HEK293 (cell line): ENCODE measurements at regions of chrX and their contacts with region 1.

Region 1: DNA sequence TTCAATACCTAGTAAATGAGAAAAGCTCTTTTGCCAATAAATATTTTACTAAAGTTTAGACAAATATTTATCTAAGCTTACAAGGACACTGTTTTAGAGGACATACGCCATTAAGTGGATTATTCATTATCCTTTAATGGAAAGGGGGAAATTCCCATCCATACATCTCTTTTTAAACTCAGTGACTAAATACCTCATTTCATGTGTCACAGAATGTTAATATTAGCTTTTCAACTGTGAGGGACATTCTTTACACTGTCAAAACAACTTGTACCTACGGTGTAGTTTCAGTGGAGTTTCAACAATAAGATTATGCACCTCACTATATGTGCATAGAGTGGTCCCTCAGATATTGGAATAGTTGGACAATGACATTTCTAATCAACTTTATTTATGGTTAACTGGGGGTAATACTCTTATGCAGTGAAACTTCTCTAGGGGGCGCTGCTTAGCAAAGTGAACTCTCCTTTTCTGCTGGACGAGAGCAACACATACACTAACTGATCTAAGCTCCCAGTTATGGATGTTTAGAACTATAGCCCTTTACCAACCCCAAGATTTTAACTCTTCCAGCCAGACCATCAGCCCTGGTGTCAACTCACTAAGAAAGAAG is 9.7 kb downstream of the HS6ST2 start:
- H3K4me3 ChIP-seq: no peak overlapping the region
- H3K27ac ChIP-seq: no peak overlapping the region
- H3K4me1 ChIP-seq: no peaks in the 10 kb centered on the region
- CTCF ChIP-seq: no peak

Region 2: DNA sequence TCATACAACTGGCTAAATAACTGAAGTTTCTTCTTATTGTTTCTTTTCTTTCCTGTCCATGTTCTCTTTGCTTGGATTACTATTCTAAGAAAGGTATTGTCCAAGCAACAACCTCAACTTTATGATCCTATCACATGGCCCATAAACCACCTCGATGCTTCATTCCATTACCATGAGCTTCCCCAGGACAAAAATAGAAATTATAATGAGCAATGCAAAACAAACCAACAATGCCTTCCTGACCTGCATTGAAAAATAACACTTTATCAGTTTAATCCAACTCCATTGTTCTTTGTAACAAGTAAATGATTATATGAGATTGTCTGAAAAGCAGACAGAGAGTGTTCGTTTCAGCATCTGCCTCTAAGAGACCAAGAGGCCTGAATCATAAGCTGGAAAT is 139.2 kb before region 1 on chrX:
- CTCF ChIA-PET with region 1: no interaction called
- POLR2A ChIA-PET with region 1: no interaction called
- H3K4me3 ChIP-seq: no peak overlapping the region
- H3K27ac ChIP-seq: no peak overlapping the region
- H3K4me1 ChIP-seq: no peaks in the 10 kb centered on the region
- CTCF ChIP-seq: no peak

Region 3: GRCh38 chrX:132924426-132924825 is 24.3 kb before region 1 on chrX:
- CTCF ChIA-PET with region 1: interaction called, 11 read pairs
- POLR2A ChIA-PET with region 1: no interaction called
- H3K4me3 ChIP-seq: no peak overlapping the region
- H3K27ac ChIP-seq: no peak overlapping the region
- H3K4me1 ChIP-seq: no peaks in the 10 kb centered on the region
- CTCF ChIP-seq: no peak

Region 4: GRCh38 chrX:132933173-132933572 is 15.6 kb before region 1 on chrX:
- CTCF ChIA-PET with region 1: interaction called, 32 read pairs
- POLR2A ChIA-PET with region 1: no interaction called
- H3K4me3 ChIP-seq: no peak overlapping the region
- H3K27ac ChIP-seq: no peak overlapping the region
- H3K4me1 ChIP-seq: no peaks in the 10 kb centered on the region
- CTCF ChIP-seq: no peak